Activated T-helper 2 cell treated with anti-CD3 and anti-CD28 coated beads, Interferon-gamma antibody, Interleukin-2, Interleukin-4, amounts not matched to agents 10 μg/mL and 5 μg/mL and 100 μg/mL, durations not matched to agents 14 hours and 24 hours and 36 hours (primary cell): ENCODE measurements at regions of chrX and their contacts with region 1.

Region 1: DNA sequence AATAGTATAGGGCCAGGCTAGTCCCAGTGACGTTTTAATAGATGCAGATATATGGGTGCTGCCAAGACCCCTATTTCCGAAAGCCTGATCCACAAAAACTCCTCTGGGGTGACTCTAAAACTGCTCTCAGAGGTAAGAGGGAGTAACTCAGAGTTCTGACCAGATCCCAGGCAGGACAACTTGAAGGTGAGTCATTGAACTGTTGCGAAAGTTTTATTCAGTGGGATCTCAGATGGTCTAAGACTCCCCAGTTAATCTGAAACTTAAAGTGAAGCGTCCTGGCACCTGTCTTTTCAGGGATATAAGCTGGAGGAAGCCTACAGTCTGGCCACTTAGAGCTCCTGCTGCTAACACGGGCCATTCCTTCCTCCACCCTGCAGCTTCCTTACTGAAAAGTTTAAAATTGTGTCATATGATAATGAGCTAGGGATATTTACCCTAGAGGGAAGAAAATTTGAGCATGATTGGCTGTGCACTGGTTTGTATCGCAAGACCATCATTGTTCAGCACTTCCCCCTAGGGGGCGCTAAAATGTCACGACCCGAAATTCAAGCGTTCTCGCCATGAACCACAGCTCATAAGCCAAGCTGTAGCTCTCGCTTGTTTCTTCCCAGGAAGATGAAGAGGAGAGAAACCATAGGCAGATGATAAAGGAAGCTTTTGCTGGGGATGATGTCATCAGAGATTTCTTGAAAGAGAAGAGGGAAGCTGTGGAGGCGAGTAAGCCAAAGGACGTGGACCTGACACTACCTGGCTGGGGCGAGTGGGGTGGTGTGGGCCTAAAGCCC is 19.5 kb downstream of the UTP14A start:
- DNase-seq: peak; percentile 53
- H3K4me3 Mint-ChIP-seq: no peak overlapping the region
- H3K27ac Mint-ChIP-seq: no peak overlapping the region
- H3K4me1 Mint-ChIP-seq: peaks cover 6% of the 10 kb centered on the region
- H3K27me3 Mint-ChIP-seq: no peaks in the 10 kb centered on the region

Region 2: GRCh38 chrX:129833152-129833990 is 92.1 kb before region 1 on chrX:
- intact Hi-C with region 1: loop called (anchors 10 kb)
- DNase-seq: no peak
- H3K4me3 Mint-ChIP-seq: no peak overlapping the region
- H3K27ac Mint-ChIP-seq: no peak overlapping the region
- H3K4me1 Mint-ChIP-seq: no peaks in the 10 kb centered on the region
- H3K27me3 Mint-ChIP-seq: no peaks in the 10 kb centered on the region

Region 3: DNA sequence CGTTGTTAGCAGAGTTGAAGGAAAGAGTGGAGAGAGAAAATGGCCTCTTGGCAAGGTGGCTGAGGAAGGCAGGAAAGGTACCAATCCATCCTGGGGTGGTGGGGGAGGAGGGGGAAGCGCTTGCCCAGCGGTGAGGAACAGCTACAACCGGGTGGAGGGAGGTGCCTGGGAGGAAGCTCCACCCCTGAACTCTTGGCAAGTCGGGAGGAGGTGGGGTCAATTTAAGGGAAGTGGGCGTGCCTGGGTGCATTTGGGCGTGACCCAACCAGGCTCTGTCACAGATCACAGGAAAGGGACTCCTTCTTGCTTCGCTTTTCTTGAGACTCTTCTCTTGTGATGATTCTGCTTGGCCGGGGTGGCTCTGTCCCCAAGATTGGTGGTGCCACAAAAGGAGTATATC is 98.6 kb after region 1 on chrX:
- intact Hi-C with region 1: loop called (anchors 1 kb)
- DNase-seq: peak; percentile 78
- H3K4me3 Mint-ChIP-seq: peak overlapping the region; percentile 37
- H3K27ac Mint-ChIP-seq: no peak overlapping the region
- H3K4me1 Mint-ChIP-seq: peaks cover 8% of the 10 kb centered on the region
- H3K27me3 Mint-ChIP-seq: no peaks in the 10 kb centered on the region

Region 4: GRCh38 chrX:130060122-130061069 is 134.9 kb after region 1 on chrX:
- intact Hi-C with region 1: loop called (anchors 2 kb)
- DNase-seq: peak; percentile 73
- H3K4me3 Mint-ChIP-seq: peak overlapping the region; percentile 76
- H3K27ac Mint-ChIP-seq: peak overlapping the region; percentile 80
- H3K4me1 Mint-ChIP-seq: peaks cover 3% of the 10 kb centered on the region
- H3K27me3 Mint-ChIP-seq: no peaks in the 10 kb centered on the region

Region 5: DNA sequence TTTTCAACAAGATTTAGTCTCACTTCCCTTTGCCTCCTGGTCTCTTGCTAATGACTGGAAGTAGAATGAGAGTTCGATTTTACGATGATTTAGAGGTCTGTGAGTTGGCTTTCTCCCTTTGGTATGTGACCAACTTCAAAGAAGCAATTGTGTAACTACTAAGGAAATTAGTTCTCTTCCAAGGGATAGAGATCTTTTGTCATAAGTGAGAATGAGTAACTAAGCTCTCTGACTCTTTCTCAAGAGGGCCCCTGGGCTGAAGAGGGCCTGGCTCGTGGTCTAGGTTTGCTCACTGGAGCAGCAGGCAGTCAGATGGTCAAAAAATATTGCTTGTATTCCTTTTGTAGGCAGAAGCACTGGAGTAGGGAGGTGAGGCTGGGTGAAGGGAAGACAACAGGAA is 801.2 kb after region 1 on chrX:
- intact Hi-C with region 1: no loop called
- DNase-seq: no peak
- H3K4me3 Mint-ChIP-seq: no peak overlapping the region
- H3K27ac Mint-ChIP-seq: no peak overlapping the region
- H3K4me1 Mint-ChIP-seq: peaks cover 8% of the 10 kb centered on the region
- H3K27me3 Mint-ChIP-seq: no peaks in the 10 kb centered on the region